Gastrocnemius medialis (tissue), 4 donors: ENCODE measurements at regions of chr16 and their contacts with region 1.

Region 1: DNA sequence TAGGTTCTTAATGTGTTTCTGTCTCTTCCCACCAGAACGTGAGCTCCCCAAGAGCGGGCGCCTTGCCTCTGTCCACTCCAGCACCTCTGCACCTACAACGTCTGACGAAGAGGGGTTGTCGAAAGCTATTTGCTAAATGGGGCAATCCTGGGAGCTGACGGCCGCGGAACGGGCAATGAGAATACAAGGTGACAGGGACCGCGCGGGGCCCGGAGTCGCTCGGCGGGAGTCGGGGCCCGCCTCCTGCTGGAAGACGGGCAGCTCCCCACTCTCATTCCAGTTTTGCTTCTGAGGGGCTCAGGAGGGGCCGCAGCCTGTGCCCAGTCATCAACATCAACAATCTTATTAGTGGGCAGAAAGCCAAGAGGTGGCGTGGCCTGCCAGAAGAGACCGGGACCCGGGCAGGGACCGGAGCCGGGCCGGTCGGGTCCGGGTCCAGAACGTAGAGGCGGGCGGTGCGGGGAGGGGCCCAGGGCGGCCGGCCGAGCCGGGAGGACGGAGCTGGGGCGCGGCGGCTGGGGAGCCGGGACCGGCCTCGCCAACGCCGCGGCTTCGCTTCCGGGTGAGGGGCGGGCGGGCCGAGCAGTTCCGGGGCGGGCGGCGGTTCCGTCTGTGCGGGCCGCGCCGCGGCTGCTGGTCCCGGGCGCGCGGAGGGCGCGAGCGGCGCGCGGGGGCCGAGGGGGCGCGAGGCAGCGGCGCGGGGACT is at the start of gene MOSMO:
- DNase-seq: peak; percentile 47 to 67
- ATAC-seq: peak; percentile 91 to 92
- H3K4me3 ChIP-seq: peak within 1 kb of the TSS; percentile 93 to 100 (median 98)
- H3K27ac ChIP-seq: peak within 1 kb of the TSS; percentile 85 to 88 (median 88)
- H3K4me1 ChIP-seq: peaks cover 20 to 30% of the 10 kb centered on the region in 2 donors
- H3K27me3 ChIP-seq: no peaks in the 10 kb centered on the region
- CTCF ChIP-seq: peak in 2 of 5 experiments; percentile 6 to 17
- POLR2A ChIP-seq: peak; percentile 64 to 82
- total RNA-seq, gene MOSMO: 12.6 to 17.6 (median 13.9) TPM

Region 2: GRCh38 chr16:21952793-21953540 is 54.7 kb before region 1 on chr16 and contains the start of gene UQCRC2:
- in situ Hi-C with region 1: no loop called
- intact Hi-C with region 1: loop called (anchors 2 kb)
- DNase-seq: peak; percentile 86
- ATAC-seq: peak; percentile 98
- H3K4me3 ChIP-seq: peak within 1 kb of the TSS; percentile 73 to 99 (median 86)
- H3K27ac ChIP-seq: peak within 1 kb of the TSS; percentile 88 to 98 (median 96)
- H3K4me1 ChIP-seq: peaks cover 37 to 45% of the 10 kb centered on the region in 2 donors
- H3K27me3 ChIP-seq: no peaks in the 10 kb centered on the region
- CTCF ChIP-seq: peak in 1 of 5 experiments; percentile 18
- POLR2A ChIP-seq: peak; percentile 87 to 96
- total RNA-seq, gene UQCRC2: 204 to 335 (median 276) TPM

Region 3: DNA sequence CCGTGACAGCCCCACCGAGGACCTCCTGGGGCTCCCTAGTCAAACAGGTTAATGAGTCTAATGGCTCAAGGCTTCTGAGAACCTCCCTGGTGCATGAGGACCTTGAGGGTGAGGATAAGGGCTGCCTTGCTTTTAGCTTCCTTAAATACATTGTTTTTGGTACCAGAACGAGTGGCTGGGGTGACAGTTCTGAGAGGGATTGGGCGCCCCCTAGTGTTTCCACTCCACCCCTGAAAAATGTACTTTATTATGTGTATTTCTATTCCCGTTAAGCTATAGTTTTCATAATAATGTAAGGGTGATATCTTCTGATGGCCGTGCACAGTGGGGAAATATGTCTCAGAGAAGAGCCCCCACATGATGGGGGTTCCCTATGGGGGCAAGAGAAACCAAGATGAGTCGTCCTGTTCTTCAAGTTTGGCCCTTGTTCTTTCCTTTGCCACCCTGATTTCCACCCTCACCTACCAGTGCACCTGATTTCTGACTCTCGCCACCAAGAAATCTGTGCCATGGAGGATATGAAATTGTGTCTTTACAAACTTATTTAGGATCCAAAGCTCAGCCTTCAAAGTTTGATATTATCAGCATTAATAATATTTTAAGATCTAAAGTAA is 70.1 kb after region 1 on chr16:
- in situ Hi-C with region 1: loop called in 2 of 4 experiments (anchors 5 to 10 kb)
- intact Hi-C with region 1: loop called (anchors 1 kb)
- DNase-seq: peak in 1 of 2 donors; percentile 22
- ATAC-seq: peak in 1 of 2 donors; percentile 51
- H3K4me3 ChIP-seq: no peak overlapping the region
- H3K27ac ChIP-seq: no peak overlapping the region
- H3K4me1 ChIP-seq: no peaks in the 10 kb centered on the region
- H3K27me3 ChIP-seq: no peaks in the 10 kb centered on the region
- CTCF ChIP-seq: peak; percentile 49 to 79 (median 71)
- POLR2A ChIP-seq: no peak

Region 4: DNA sequence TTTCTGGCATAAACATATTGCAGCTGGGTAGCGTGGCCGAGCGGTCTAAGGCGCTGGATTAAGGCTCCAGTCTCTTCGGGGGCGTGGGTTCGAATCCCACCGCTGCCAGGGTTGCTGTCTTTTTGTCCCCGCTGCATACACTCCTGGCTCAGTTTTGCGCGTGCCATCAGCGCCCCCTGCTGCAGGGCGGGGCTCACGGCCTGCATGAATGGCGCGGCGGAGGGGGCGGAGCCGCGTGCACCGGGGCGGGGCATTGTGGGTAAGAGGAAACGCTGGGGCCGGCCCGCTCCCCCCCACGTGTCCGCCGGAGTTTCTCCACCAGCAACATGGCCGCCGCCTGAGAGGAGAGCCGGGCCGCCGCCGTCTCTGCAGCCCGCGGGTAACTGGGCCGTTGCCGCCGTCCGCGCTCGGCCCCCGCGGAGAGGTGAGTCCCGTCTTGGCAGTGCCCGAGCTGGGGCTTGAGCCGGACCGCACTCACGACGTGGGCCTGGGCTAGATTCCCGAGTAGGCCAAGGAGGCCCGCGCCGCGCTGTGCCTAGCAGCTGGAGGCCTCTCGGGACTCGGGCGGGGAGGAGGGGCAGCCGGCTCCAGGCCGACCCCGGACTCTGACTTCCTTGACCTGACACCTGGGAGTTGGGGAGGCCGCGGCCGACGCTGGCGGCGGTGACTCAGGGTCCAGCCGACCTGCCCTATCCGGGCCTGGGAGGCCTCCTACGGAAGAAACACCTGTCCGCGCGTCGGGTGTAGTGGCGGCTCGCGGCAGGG is 289.6 kb after region 1 on chr16 and contains the start of gene POLR3E:
- in situ Hi-C with region 1: loop called (anchors 10 to 25 kb)
- intact Hi-C with region 1: loop called (anchors 2 kb)
- DNase-seq: peak; percentile 98 to 99
- ATAC-seq: peak; percentile 77 to 79
- H3K4me3 ChIP-seq: peak within 1 kb of the TSS; percentile 87 to 97 (median 94)
- H3K27ac ChIP-seq: peak within 1 kb of the TSS; percentile 97 to 100 (median 98)
- H3K4me1 ChIP-seq: peaks cover 12 to 18% of the 10 kb centered on the region in 2 donors
- H3K27me3 ChIP-seq: no peaks in the 10 kb centered on the region
- CTCF ChIP-seq: peak; percentile 93 to 98 (median 98)
- POLR2A ChIP-seq: peak; percentile 88 to 90
- total RNA-seq, gene POLR3E: 105 to 182 (median 116) TPM